ENCODE measurements at regions of chr21 and their contacts with region 1.

Region 1: GRCh38 chr21:41879190-41879998 is at the start of gene PRDM15:
- DNase-seq: peak; percentile 69
- H3K4me3 Mint-ChIP-seq: peak within 1 kb of the TSS; percentile 74
- H3K27ac Mint-ChIP-seq: peak within 1 kb of the TSS; percentile 94
- H3K4me1 Mint-ChIP-seq: peaks cover 8% of the 10 kb centered on the region
- H3K27me3 Mint-ChIP-seq: no peaks in the 10 kb centered on the region
- CTCF ChIP-seq: no peak
- total RNA-seq, gene PRDM15: 5.2 and 5.7 TPM in 2 replicates

Region 2: GRCh38 chr21:41832596-41833496 is 46.5 kb before region 1 on chr21:
- CTCF ChIA-PET with region 1: no interaction called
- POLR2A ChIA-PET with region 1: no interaction called
- intact Hi-C with region 1: no loop called
- DNase-seq: no peak
- H3K4me3 Mint-ChIP-seq: no peak overlapping the region
- H3K27ac Mint-ChIP-seq: no peak overlapping the region
- H3K4me1 Mint-ChIP-seq: peaks cover 6% of the 10 kb centered on the region
- H3K27me3 Mint-ChIP-seq: no peaks in the 10 kb centered on the region
- CTCF ChIP-seq: no peak

Region 3: DNA sequence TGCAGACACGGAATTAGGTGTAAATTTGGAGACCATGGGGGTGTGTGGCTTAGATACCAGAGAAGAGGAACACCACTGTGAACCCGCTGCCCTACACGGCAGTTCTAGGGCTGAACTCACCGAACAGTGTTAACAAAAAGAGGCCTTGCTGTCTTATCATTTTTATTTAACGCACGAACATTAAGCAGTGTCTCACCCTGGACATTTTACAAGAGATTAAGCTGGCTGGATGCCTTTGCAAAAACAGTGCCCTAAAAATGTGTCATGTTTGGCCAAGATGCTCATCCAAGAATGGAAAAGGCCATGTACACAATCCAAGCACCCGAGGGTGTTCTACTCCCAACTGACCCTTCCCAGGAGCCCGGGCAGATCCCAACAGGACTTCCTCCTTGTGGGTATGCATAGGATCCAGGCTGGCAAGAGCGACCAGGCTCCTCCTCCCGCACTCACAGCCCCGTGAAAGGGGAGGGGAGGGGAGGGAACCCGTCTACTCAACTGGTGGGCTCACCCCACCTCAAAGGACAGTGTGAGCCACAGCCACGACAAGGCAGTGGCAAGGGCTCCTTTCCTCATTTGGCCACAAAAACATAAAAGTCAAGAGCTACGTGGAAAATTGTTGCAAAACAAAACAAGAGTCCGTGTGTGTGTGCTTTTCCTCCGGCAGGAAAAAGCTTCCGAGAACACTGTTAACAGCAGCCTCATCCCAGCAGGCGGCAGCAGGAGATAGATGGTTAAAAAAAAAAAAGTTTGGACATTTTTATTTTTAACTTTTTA is 54.1 kb after region 1 on chr21:
- CTCF ChIA-PET with region 1: no interaction called
- POLR2A ChIA-PET with region 1: interaction called, 12 read pairs
- intact Hi-C with region 1: loop called (anchors 2 kb)
- DNase-seq: peak; percentile 74
- H3K4me3 Mint-ChIP-seq: no peak overlapping the region
- H3K27ac Mint-ChIP-seq: peak overlapping the region; percentile 84
- H3K4me1 Mint-ChIP-seq: peaks cover 36% of the 10 kb centered on the region
- H3K27me3 Mint-ChIP-seq: no peaks in the 10 kb centered on the region
- CTCF ChIP-seq: no peak

Region 4: GRCh38 chr21:42009831-42010523 is 130.6 kb after region 1 on chr21 and contains the start of gene ZBTB21:
- CTCF ChIA-PET with region 1: interaction called, 3 read pairs
- POLR2A ChIA-PET with region 1: interaction called, 5 read pairs
- intact Hi-C with region 1: loop called (anchors 5 kb)
- DNase-seq: peak; percentile 98
- H3K4me3 Mint-ChIP-seq: peak within 1 kb of the TSS; percentile 78
- H3K27ac Mint-ChIP-seq: peak within 1 kb of the TSS; percentile 95
- H3K4me1 Mint-ChIP-seq: peaks cover 18% of the 10 kb centered on the region
- H3K27me3 Mint-ChIP-seq: no peaks in the 10 kb centered on the region
- CTCF ChIP-seq: no peak
- total RNA-seq, gene ZBTB21: 21.5 and 27.3 TPM in 2 replicates

Region 5: GRCh38 chr21:42117229-42117966 is 238.0 kb after region 1 on chr21:
- CTCF ChIA-PET with region 1: interaction called, 7 read pairs
- POLR2A ChIA-PET with region 1: interaction called, 11 read pairs
- intact Hi-C with region 1: loop called (anchors 5 kb)
- DNase-seq: peak; percentile 67
- H3K4me3 Mint-ChIP-seq: no peak overlapping the region
- H3K27ac Mint-ChIP-seq: no peak overlapping the region
- H3K4me1 Mint-ChIP-seq: peaks cover 40% of the 10 kb centered on the region
- H3K27me3 Mint-ChIP-seq: peaks cover 48% of the 10 kb centered on the region
- CTCF ChIP-seq: peak; percentile 85

Measured in MCF 10A (cell line).